PC-9 (cell line): ENCODE measurements at regions of chr1 and their contacts with region 1.

Region 1: GRCh38 chr1:160284782-160285344 is at the start of gene PEX19:
- DNase-seq: peak; percentile 81 to 92
- H3K4me3 ChIP-seq: peak within 1 kb of the TSS; percentile 74
- H3K27ac ChIP-seq: peak within 1 kb of the TSS; percentile 69
- H3K4me1 ChIP-seq: peaks cover 32% of the 10 kb centered on the region
- H3K27me3 ChIP-seq: no peaks in the 10 kb centered on the region
- CTCF ChIP-seq: no peak
- total RNA-seq, gene PEX19: 50.1 and 52.5 TPM in 2 replicates

Region 2: GRCh38 chr1:159979257-159979656 is 305.6 kb before region 1 on chr1:
- CTCF ChIA-PET with region 1: no interaction called
- POLR2A ChIA-PET with region 1: no interaction called
- intact Hi-C with region 1: no loop called
- DNase-seq: no peak
- H3K4me3 ChIP-seq: no peak overlapping the region
- H3K27ac ChIP-seq: no peak overlapping the region
- H3K4me1 ChIP-seq: no peaks in the 10 kb centered on the region
- H3K27me3 ChIP-seq: peaks cover 10% of the 10 kb centered on the region
- CTCF ChIP-seq: no peak

Region 3: DNA sequence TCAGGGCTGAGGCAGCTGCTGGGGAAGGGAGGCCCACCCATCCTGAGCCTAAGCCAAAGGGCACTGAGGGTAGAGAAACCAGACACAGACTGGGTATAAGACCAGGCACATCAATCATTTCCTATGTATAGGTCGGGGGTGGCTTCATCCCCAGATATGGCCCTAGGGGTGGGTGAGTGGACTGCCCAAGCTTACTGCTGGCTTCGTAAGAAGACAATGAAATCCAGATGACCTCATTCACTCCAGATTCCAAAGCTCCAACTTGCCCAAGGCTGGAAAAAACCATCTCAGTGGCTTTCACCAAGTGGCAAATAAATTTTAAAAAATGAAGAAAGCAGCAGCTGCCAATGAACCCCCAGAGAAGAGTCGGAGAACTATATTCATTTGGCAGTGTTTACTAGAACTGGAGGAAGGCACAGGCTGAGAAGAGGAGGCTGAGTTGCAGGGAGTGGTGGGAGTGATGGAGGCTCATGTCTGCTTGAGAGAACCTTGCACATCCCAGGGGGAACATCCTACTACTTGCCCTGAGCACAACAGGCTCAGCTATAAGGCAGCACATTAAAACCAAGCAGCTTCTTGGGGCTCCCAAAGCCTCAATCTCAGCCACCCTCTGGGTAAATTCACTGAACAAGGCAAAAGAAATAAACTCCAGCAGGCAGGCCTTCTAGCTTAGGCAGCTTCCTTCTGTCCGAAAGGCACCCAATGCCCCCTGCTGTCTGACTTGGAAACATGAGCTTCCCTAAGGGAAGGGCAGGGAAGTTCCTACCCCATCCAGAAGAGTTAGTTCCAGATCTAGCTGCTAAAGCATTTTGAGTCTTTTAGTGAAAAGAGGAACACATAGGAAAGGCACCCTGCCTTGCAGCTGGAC is 65.6 kb before region 1 on chr1:
- CTCF ChIA-PET with region 1: no interaction called
- POLR2A ChIA-PET with region 1: no interaction called
- intact Hi-C with region 1: loop called (anchors 5 kb)
- DNase-seq: peak in 1 of 2 experiments; percentile 39
- H3K4me3 ChIP-seq: no peak overlapping the region
- H3K27ac ChIP-seq: no peak overlapping the region
- H3K4me1 ChIP-seq: 0 out of 2 replicates have a peak, but pooled peaks cover 4% of the 10 kb centered on the region
- H3K27me3 ChIP-seq: no peaks in the 10 kb centered on the region
- CTCF ChIP-seq: peak; percentile 65

Region 4: GRCh38 chr1:160244209-160244608 is 40.7 kb before region 1 on chr1:
- CTCF ChIA-PET with region 1: no interaction called
- POLR2A ChIA-PET with region 1: no interaction called
- intact Hi-C with region 1: no loop called
- DNase-seq: no peak
- H3K4me3 ChIP-seq: no peak overlapping the region
- H3K27ac ChIP-seq: no peak overlapping the region
- H3K4me1 ChIP-seq: no peaks in the 10 kb centered on the region
- H3K27me3 ChIP-seq: no peaks in the 10 kb centered on the region
- CTCF ChIP-seq: no peak

Region 5: DNA sequence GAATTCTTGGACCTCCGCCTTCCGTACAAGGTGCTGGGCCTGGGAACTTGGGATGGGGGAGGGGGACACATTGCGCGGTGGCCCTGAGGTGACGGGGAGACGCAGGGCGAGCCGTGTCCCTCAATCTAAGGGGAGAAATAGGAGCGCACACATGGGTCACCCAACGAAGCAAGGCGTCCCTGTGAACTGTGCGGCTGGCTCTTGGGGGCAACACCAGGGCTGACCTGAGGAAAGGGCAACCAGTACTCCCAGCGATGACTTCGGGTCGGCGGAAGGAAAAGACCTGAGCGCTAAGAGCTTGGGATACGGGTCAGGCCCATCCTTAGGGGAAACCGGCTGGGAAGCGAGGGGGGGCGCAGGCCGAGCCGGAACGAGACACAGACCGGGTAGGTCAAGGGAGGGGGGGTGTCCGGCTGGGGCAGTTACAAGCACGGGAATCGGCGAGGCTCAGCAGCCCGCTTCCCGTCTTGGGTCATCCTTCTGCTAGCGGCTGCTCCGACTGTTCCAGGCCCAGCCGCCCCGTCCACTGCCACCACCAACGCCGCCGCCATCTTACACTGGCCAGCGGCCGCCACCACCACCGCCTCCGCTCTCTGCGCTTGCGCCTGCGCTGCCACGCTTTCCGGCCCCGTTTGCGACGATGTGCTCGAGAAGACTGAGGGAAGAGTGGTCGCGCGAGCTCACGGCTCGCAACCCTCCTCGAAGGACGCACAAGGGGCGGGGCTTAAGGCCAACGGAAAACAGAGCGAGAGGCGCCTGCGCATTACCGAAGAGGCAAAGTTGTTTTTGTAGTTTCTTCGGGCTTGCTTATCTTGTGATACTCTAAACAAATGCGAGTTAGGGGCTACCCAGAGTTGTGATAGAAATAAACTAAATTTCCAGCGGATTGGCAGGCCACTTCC is 22.7 kb before region 1 on chr1 and contains the start of gene DCAF8:
- CTCF ChIA-PET with region 1: no interaction called
- POLR2A ChIA-PET with region 1: interaction called, 8 read pairs
- intact Hi-C with region 1: loop called (anchors 1 kb)
- DNase-seq: peak; percentile 88 to 95
- H3K4me3 ChIP-seq: peak within 1 kb of the TSS; percentile 82
- H3K27ac ChIP-seq: peak within 1 kb of the TSS; percentile 84
- H3K4me1 ChIP-seq: peaks cover 31% of the 10 kb centered on the region
- H3K27me3 ChIP-seq: no peaks in the 10 kb centered on the region
- CTCF ChIP-seq: no peak
- total RNA-seq, gene DCAF8: 152 and 161 TPM in 2 replicates

Region 6: DNA sequence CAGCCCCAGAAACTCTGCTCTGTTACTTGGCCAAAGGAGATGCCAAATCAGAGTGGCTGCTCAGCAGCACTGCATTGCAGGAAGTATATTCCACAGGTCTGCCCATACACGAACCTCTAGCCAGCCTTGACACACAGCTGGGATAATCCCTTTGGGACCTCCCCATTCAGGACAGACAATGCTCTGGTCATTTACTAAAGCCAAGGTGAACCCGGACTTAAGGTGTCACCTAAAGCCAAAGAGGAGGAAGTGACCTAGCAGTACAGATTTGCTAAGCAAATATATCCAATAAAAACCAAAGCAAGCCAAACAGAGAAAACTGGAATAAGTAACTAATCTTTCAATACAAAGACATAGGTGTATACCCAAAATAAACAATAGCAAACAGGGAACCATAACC is 30.5 kb after region 1 on chr1:
- CTCF ChIA-PET with region 1: no interaction called
- POLR2A ChIA-PET with region 1: no interaction called
- intact Hi-C with region 1: no loop called
- DNase-seq: no peak
- H3K4me3 ChIP-seq: no peak overlapping the region
- H3K27ac ChIP-seq: no peak overlapping the region
- H3K4me1 ChIP-seq: no peaks in the 10 kb centered on the region
- H3K27me3 ChIP-seq: no peaks in the 10 kb centered on the region
- CTCF ChIP-seq: no peak

Region 7: GRCh38 chr1:160342953-160343869 is 58.3 kb after region 1 on chr1 and contains the starts of genes COPA and NCSTN:
- CTCF ChIA-PET with region 1: interaction called, 17 read pairs
- POLR2A ChIA-PET with region 1: no interaction called
- intact Hi-C with region 1: no loop called
- DNase-seq: peak; percentile 85 to 89
- H3K4me3 ChIP-seq: peak within 1 kb of the TSS; percentile 88
- H3K27ac ChIP-seq: peak within 1 kb of the TSS; percentile 41
- H3K4me1 ChIP-seq: peaks cover 15% of the 10 kb centered on the region
- H3K27me3 ChIP-seq: no peaks in the 10 kb centered on the region
- CTCF ChIP-seq: no peak
- total RNA-seq, gene COPA: 146 and 147 TPM in 2 replicates
- total RNA-seq, gene NCSTN: 54.7 and 55.8 TPM in 2 replicates

Region 8: DNA sequence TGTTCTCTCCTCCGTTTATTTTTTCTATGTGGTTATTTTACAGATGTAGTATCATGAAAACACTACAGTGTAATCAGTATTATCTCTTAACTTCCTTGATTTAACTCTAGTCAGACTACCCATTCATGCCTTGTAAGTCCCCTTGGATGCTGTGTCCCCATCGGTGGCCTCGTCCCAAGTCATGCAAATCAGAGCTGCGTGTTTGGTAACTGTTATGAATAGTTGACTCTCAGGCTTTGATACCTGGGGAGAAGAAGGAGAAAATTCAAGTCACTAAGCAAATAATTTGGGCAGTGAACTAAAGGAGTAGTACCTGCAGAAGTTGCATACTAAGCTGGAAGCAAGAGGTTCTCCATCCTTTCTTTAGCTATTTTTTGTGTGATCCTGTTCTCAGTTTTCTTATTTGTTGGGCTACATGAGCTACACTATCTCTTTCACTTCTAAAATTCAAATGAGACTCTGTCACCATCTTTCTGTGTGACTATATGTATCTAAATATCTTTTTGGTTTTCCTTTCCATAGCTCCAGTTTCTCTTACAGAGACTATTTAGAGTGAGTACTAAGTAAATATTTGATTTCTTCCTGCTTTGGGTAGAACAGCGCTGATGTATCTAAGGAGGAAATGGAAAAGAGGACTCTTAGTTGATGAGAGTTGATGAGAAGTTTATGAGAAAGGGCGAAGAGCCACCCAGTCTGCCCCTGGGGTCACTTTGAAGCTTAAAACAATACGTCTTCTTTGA is 166.4 kb after region 1 on chr1:
- CTCF ChIA-PET with region 1: no interaction called
- POLR2A ChIA-PET with region 1: no interaction called
- intact Hi-C with region 1: no loop called
- DNase-seq: no peak
- H3K4me3 ChIP-seq: no peak overlapping the region
- H3K27ac ChIP-seq: no peak overlapping the region
- H3K4me1 ChIP-seq: no peaks in the 10 kb centered on the region
- H3K27me3 ChIP-seq: peaks cover 55% of the 10 kb centered on the region
- CTCF ChIP-seq: no peak